Ascending aorta (tissue), 2 donors: ENCODE measurements at regions of chr10 and their contacts with region 1.

Region 1: GRCh38 chr10:127265288-127265687 is 68.9 kb upstream of the INSYN2A start:
- DNase-seq: no peak
- H3K4me3 ChIP-seq: no peak overlapping the region
- H3K27ac ChIP-seq: no peak overlapping the region
- H3K4me1 ChIP-seq: no peaks in the 10 kb centered on the region
- H3K27me3 ChIP-seq: no peaks in the 10 kb centered on the region
- CTCF ChIP-seq: no peak

Region 2: DNA sequence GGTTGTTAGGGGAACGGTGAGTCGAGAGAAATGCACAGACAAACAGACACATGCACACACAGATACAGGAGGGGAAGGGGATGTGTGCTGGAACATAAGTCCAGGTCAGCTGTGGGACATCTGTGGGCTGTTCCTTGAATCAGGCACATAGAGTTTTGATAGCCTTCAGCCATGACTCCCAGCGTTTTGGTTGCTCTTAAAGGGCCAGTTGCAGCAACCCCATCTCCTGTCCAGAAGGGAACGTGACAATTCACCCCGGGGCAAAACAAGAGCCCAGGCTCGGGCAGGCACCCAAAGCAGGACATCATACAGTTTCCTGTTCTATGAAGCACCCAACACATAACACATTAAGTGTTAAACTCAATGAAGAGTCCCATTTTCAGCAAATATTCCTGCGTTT is 78.5 kb before region 1 on chr10:
- intact Hi-C with region 1: no loop called
- DNase-seq: no peak
- H3K4me3 ChIP-seq: no peak overlapping the region
- H3K27ac ChIP-seq: no peak overlapping the region
- H3K4me1 ChIP-seq: no peaks in the 10 kb centered on the region
- H3K27me3 ChIP-seq: no peaks in the 10 kb centered on the region
- CTCF ChIP-seq: no peak

Region 3: DNA sequence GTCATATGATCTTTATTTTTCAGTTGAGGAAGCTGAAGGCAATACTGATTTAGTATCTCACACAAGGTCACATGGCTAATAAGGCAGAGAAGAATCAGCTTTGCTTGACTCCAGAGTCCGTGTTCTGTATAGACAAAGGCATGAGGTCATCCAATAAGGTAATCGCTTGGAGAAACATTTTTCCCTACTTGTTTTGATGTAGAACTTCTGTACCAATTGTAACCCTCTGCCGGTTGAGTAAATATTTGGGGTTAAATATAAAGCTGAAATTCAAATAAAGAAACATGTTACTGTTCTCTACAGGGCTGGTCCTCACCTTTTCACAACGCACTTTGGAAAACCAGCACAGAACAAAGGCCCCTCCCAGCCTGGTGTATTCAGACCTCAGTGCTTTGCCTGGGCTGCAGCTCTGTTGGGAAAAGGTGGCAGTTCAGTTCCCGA is 14.1 kb after region 1 on chr10:
- intact Hi-C with region 1: loop called (anchors 1 kb)
- DNase-seq: no peak
- H3K4me3 ChIP-seq: no peak overlapping the region
- H3K27ac ChIP-seq: no peak overlapping the region
- H3K4me1 ChIP-seq: no peaks in the 10 kb centered on the region
- H3K27me3 ChIP-seq: no peaks in the 10 kb centered on the region
- CTCF ChIP-seq: no peak